ENCODE measurements at regions of chr7 and their contacts with region 1.

Region 1: GRCh38 chr7:22110227-22110839 is 164.6 kb upstream of the CDCA7L start:
- DNase-seq: peak; percentile 81
- H3K4me3 Mint-ChIP-seq: no peak overlapping the region
- H3K27ac Mint-ChIP-seq: no peak overlapping the region
- H3K4me1 Mint-ChIP-seq: no peaks in the 10 kb centered on the region
- H3K27me3 Mint-ChIP-seq: no peaks in the 10 kb centered on the region
- CTCF ChIP-seq: peak; percentile 87

Region 2: GRCh38 chr7:21305455-21306235 is 804.7 kb before region 1 on chr7:
- CTCF ChIA-PET with region 1: no interaction called
- POLR2A ChIA-PET with region 1: no interaction called
- intact Hi-C with region 1: no loop called
- DNase-seq: peak; percentile 36
- H3K4me3 Mint-ChIP-seq: no peak overlapping the region
- H3K27ac Mint-ChIP-seq: no peak overlapping the region
- H3K4me1 Mint-ChIP-seq: no peaks in the 10 kb centered on the region
- H3K27me3 Mint-ChIP-seq: no peaks in the 10 kb centered on the region
- CTCF ChIP-seq: no peak

Region 3: DNA sequence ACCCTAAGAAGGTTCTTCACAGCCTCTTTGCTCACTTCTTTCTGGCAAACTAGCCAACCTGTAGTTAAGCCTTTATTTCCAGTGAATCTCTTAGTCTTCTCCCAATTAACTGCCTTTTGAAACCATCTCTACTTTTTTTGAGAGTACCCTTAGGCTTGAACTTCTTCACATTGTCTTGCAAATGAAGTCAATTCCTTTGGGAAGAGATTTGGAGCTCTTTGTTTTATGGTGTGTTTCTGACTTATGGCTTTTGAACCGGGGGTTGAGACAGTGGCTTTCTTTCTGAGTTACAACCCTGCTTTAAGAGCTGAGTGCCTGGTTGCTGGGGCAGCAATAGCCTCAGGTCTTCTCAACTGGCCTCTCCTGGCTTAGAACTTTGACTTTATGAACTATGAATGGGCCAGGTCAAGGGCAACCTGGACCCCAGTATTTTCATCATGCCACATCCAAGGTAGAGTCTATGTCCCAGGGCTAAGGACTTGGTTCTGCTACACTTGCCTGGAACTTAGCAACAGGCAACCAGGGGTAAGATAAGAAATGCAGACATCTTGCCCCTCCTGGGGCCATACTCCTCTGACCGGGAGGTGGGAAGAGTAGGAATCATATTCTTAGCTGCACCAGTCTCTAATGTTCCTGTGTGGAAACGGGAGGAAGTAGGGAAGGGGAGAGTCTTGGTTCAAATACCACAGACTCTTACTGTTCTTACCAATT is 629.5 kb before region 1 on chr7:
- CTCF ChIA-PET with region 1: no interaction called
- POLR2A ChIA-PET with region 1: no interaction called
- intact Hi-C with region 1: no loop called
- DNase-seq: no peak
- H3K4me3 Mint-ChIP-seq: no peak overlapping the region
- H3K27ac Mint-ChIP-seq: no peak overlapping the region
- H3K4me1 Mint-ChIP-seq: no peaks in the 10 kb centered on the region
- H3K27me3 Mint-ChIP-seq: no peaks in the 10 kb centered on the region
- CTCF ChIP-seq: no peak

Region 4: GRCh38 chr7:22121702-22122474 is 11.6 kb after region 1 on chr7:
- CTCF ChIA-PET with region 1: interaction called, 14 read pairs
- POLR2A ChIA-PET with region 1: no interaction called
- intact Hi-C with region 1: no loop called
- DNase-seq: no peak
- H3K4me3 Mint-ChIP-seq: no peak overlapping the region
- H3K27ac Mint-ChIP-seq: no peak overlapping the region
- H3K4me1 Mint-ChIP-seq: no peaks in the 10 kb centered on the region
- H3K27me3 Mint-ChIP-seq: no peaks in the 10 kb centered on the region
- CTCF ChIP-seq: no peak

Region 5: DNA sequence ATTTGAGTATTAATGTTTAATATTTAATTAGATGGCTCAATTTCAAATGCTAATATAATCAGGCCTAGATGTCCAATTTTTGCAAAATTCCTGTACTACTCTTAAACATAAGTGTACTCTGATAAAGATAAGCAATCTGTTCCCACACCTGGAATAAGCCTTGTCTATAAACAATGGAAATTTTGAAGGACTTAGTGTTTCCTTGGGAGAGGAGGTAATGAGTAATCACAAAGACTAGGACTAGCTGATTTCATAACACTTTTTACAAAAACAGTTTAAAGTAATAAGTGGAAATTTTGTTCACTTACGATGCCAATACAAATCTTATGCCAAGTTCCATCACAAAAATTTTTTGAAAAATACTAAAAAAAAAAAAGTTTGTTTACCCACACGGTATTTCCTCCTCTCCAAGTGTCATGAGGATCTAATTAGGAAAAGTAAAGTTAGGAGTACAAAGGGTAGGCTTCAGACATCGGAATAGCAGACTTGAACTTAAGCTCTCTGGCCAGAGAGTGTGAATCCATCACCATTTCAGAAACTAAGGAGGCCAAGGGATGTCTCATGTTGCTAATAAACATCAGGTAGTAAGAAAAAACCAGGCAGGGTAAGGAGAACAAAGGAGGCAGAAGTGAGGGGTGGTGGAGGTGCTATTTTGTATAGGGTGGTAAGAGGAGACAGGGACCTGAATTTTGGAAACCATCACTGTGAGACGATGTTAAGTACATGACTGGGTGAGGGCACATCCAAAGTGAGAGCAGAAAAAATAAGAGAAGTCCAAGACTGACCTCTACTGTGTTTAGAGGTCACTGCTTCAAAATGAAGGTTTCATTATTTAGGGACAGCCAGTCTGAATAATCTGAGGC is 185.3 kb after region 1 on chr7:
- CTCF ChIA-PET with region 1: interaction called, 20 read pairs
- POLR2A ChIA-PET with region 1: no interaction called
- intact Hi-C with region 1: loop called (anchors 1 kb)
- DNase-seq: peak; percentile 12
- H3K4me3 Mint-ChIP-seq: no peak overlapping the region
- H3K27ac Mint-ChIP-seq: peak overlapping the region; percentile 15
- H3K4me1 Mint-ChIP-seq: peaks cover 7% of the 10 kb centered on the region
- H3K27me3 Mint-ChIP-seq: no peaks in the 10 kb centered on the region
- CTCF ChIP-seq: no peak

Region 6: DNA sequence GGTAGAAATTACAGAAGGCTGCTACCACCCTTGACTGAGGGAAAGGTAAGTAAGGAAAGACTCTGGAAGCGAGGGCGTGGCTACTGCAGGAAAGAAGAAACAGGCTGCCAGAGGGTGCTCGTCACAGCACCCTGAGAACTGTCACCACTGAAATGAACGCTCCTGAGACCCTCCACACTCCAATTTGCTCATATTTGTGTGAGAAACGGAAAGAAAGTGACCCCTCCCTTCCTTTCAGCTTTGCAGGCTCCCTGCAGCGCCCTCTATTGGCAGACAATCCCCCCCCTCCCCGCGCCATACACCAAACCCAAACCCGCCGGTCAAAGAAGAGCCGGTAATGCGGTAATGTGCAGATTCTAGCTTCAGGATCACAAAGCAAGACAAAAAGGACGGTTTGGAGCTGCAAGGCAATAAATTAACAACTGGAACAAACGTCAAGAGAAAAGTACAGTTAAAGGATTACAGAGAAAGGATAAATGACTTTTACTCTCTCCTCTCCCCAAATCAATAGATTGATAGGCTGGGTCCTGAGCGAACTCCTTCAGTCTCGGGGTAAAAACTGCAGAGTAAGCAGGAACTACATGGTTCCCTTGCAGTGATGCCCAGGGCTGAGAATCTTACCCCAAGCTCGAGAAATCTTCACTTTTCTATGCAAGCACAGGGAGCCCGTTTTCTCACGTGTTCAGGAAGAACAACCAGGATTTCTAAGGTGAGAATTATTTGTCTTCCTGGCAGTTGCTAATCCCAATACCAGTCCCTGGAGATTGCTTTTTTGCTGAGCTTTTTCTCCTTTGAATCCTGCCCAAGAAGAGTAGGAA is 342.0 kb after region 1 on chr7:
- CTCF ChIA-PET with region 1: interaction called, 6 read pairs
- POLR2A ChIA-PET with region 1: no interaction called
- intact Hi-C with region 1: loop called (anchors 1 kb)
- DNase-seq: peak; percentile 52
- H3K4me3 Mint-ChIP-seq: peak overlapping the region; percentile 56
- H3K27ac Mint-ChIP-seq: no peak overlapping the region
- H3K4me1 Mint-ChIP-seq: peaks cover 9% of the 10 kb centered on the region
- H3K27me3 Mint-ChIP-seq: no peaks in the 10 kb centered on the region
- CTCF ChIP-seq: peak; percentile 59

Region 7: DNA sequence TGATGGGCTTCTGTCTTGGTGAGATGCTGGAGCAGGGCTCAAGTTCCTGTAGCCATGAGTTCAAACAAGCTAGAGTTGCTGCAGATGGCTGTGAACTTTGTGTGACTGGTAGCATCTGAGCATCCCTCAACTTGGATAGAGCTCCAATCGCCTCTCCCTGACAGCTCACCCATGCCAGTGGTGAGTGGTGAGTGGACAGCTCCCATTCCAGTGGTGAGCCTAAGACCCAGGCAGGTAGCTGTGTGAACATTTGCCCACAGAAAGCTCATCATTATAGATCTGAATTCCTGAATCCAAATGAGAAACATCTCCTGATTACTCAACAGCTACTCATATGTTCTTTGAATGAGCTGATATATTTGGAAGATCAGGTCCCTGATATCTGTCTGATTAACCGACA is 364.3 kb after region 1 on chr7:
- CTCF ChIA-PET with region 1: interaction called, 88 read pairs
- POLR2A ChIA-PET with region 1: no interaction called
- intact Hi-C with region 1: no loop called
- DNase-seq: no peak
- H3K4me3 Mint-ChIP-seq: no peak overlapping the region
- H3K27ac Mint-ChIP-seq: no peak overlapping the region
- H3K4me1 Mint-ChIP-seq: no peaks in the 10 kb centered on the region
- H3K27me3 Mint-ChIP-seq: no peaks in the 10 kb centered on the region
- CTCF ChIP-seq: no peak

Region 8: GRCh38 chr7:22499044-22499443 is 388.7 kb after region 1 on chr7:
- CTCF ChIA-PET with region 1: interaction called, 17 read pairs
- POLR2A ChIA-PET with region 1: no interaction called
- intact Hi-C with region 1: no loop called
- DNase-seq: no peak
- H3K4me3 Mint-ChIP-seq: no peak overlapping the region
- H3K27ac Mint-ChIP-seq: no peak overlapping the region
- H3K4me1 Mint-ChIP-seq: peaks cover 6% of the 10 kb centered on the region
- H3K27me3 Mint-ChIP-seq: no peaks in the 10 kb centered on the region
- CTCF ChIP-seq: no peak